ENCODE measurements at regions of chrX and their contacts with region 1.

Region 1: DNA sequence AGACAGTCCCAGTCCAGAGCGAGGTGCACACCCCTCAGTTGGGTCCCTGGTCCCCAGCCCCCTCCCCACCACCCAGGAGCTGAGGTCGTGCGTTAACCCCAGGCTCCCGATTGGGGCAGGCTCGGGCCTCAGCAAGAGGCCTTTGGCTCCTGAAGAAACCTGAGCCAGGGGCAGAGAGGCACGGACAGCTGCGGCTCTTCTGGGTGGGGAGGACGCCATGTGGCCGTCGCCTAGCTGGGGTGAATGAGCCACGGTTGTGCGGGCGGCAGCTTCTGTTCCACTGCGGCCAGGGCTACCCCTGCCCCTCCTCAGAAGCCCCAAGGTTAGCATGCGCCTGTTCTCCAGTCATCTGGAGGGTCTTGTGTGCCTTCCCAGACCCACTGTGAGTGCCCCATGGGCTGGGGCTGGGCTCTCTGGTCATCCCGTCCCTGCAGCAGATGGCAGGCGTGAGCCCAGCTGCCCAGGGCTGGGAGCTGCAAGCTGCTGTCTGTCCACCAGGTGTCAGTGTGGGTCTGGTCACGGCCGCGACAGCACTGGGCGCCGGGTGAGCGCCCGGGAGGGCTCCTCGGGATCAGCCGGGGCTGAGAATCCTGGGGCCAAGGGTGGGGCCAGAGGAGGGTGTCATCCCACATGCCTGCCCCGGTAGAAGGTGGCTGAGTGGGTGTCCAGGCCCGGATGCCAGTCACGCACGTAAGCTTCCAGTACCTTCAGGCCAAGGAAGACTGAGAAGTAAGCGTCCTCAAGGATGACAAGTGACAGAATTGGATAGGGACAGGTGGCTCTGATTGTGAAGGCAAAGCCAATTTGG is 21.9 kb downstream of the ATP2B3 start:
- DNase-seq: peak; percentile 76
- ATAC-seq: peak; percentile 93
- H3K4me3 Mint-ChIP-seq: no peak overlapping the region
- H3K27ac Mint-ChIP-seq: no peak overlapping the region
- H3K4me1 Mint-ChIP-seq: no peaks in the 10 kb centered on the region
- H3K27me3 Mint-ChIP-seq: no peaks in the 10 kb centered on the region
- CTCF ChIP-seq: no peak; the same call in 1 of the 2 replicates

Region 2: GRCh38 chrX:153554519-153555167 is 15.3 kb after region 1 on chrX:
- CTCF ChIA-PET with region 1: interaction called, 20 read pairs
- POLR2A ChIA-PET with region 1: no interaction called
- DNase-seq: peak; percentile 74
- ATAC-seq: peak; percentile 84
- H3K4me3 Mint-ChIP-seq: no peak overlapping the region
- H3K27ac Mint-ChIP-seq: no peak overlapping the region
- H3K4me1 Mint-ChIP-seq: no peaks in the 10 kb centered on the region
- H3K27me3 Mint-ChIP-seq: no peaks in the 10 kb centered on the region
- CTCF ChIP-seq: peak; percentile 38

Region 3: DNA sequence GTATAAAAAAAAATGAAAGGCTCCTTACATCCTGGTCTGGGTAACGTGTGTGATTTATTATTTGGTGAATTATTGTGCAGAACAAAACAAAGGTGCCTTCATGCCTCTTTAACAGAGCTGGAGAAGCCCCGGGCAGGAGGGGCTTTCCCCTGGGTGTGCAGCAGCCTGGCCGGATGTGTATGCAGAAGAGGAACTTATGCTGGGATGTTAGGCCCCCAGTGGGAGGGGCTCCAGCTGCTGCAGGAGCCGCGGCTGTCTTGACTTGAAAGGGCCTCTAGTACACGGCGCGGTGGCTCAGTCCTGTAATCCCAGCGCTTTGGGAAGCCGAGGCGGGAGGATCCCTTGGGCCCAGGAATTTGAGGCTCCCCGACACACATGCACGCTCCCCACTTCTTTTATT is 43.5 kb after region 1 on chrX:
- CTCF ChIA-PET with region 1: interaction called, 10 read pairs
- POLR2A ChIA-PET with region 1: no interaction called
- DNase-seq: no peak
- ATAC-seq: no peak
- H3K4me3 Mint-ChIP-seq: no peak overlapping the region
- H3K27ac Mint-ChIP-seq: no peak overlapping the region
- H3K4me1 Mint-ChIP-seq: peaks cover 14% of the 10 kb centered on the region
- H3K27me3 Mint-ChIP-seq: no peaks in the 10 kb centered on the region; the same call in 1 of the 2 replicates
- CTCF ChIP-seq: no peak

Region 4: DNA sequence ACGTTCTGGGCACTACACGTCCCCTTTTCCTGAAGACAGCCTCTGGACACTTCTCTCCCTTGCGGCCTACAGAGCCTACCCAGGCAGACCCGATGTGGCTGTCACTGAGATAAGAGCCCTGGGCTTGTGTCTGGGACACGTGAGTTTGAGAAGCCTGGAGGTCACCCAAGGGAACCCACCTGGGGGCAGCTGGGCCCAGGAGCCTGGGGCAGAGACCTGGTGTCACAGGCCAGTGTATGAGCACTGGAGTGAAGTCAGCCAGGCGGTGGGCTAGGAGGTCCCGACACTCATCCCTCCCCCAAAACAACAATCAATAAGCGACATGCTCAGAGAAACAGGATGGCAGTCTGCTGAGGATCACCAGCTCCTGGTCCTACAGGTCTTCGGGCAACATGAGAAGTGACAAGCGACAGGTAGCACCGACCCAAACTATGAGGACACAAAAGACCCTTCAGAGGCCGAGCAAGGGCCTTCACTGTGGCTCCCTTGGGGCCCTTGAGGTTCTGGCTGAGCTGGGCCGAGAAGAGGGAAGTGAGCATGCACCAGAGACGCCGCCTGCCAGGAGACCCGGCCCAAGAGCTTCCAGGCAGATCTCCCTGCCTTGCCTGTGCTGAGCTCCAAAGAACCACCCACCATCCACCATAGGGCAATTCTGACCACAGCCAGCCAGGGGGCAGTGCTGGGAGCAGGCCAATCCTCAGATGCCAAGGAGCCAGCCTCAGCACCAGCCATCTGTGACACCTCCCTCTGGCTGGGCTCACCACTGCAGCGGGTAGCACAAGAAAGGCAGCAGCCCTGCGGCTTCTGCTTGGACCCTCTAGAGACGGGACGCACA is 96.6 kb after region 1 on chrX:
- CTCF ChIA-PET with region 1: interaction called, 10 read pairs
- POLR2A ChIA-PET with region 1: no interaction called
- DNase-seq: peak; percentile 70
- ATAC-seq: peak; percentile 97
- H3K4me3 Mint-ChIP-seq: no peak overlapping the region
- H3K27ac Mint-ChIP-seq: no peak overlapping the region
- H3K4me1 Mint-ChIP-seq: no peaks in the 10 kb centered on the region
- H3K27me3 Mint-ChIP-seq: peaks cover 6% of the 10 kb centered on the region
- CTCF ChIP-seq: no peak

Region 5: DNA sequence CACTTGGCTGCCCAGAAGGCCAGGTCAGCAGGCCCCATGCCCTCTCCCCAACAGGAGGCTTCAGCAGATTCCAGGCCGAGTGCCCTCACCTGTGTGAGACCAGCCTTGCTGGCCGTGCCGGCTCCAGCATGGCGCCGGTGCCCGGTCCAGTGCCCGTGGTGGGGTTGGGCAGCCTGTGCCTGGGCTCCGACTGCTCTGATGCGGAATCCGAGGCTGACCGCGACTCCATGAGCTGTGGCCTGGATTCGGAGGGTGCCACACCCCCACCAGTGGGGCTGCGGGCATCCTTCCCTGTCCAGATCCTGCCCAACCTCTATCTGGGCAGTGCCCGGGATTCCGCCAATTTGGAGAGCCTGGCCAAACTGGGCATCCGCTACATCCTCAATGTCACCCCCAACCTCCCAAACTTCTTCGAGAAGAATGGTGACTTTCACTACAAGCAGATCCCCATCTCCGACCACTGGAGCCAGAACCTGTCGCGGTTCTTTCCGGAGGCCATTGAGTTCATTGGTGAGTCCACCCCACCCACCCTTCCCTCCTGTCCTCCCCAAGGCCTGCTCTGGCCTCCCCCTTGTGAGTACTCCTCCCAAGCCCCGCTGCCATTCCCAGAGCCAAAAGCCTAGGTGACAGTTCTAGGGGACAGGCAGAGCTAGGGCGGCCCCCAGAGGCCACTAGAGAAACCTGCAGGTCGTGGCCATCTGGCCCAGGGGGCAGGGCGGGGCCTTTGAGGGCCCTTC is 110.0 kb after region 1 on chrX:
- CTCF ChIA-PET with region 1: interaction called, 20 read pairs
- POLR2A ChIA-PET with region 1: no interaction called
- DNase-seq: peak; percentile 73
- ATAC-seq: peak; percentile 73
- H3K4me3 Mint-ChIP-seq: no peak overlapping the region
- H3K27ac Mint-ChIP-seq: no peak overlapping the region
- H3K4me1 Mint-ChIP-seq: no peaks in the 10 kb centered on the region
- H3K27me3 Mint-ChIP-seq: peaks cover 50% of the 10 kb centered on the region
- CTCF ChIP-seq: no peak

Region 6: DNA sequence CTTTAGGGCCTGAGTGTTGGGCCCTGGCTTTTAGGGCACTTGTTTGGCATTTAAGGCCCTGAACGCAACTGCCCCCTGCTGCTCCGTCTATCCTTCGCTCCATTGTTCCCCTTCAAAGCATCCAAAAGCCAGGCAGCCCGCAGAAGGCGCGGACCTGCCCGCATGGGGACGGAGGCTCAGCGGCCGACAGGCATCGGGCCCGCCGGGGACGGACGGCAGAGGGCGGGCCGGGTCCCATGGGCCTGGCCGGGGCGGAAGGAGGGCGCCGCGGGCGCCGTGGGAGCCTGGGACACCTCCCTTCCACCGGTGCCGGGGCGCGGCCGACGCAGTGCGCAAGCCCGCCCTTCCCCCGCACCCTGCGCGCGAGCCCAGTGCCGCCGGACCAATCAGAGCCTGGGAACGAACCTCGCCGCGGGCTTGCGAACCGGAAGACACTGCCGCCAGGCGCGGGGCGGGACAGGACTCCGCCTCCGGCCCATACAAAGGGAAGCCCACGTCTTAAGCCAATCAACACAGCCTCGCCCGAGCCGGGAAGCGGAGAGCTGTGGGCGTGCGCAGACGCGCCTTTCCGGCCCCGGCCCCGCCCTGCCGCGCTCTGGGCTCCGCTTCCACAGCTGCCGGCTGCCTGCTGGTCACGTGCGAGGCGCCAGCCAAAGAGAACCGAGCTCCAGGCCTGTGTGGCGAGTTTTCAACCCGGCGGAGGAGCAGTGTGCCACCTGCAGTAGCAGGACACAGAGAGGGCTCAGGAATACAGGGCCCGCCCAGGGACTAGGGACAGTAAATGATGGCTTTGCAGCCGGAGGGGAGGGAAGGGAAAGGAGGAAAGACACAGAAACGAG is 388.8 kb after region 1 on chrX:
- CTCF ChIA-PET with region 1: no interaction called
- POLR2A ChIA-PET with region 1: no interaction called
- DNase-seq: peak; percentile 91
- ATAC-seq: peak; percentile 89
- H3K4me3 Mint-ChIP-seq: peak overlapping the region; percentile 79
- H3K27ac Mint-ChIP-seq: peak overlapping the region; percentile 98
- H3K4me1 Mint-ChIP-seq: peaks cover 25% of the 10 kb centered on the region
- H3K27me3 Mint-ChIP-seq: no peaks in the 10 kb centered on the region
- CTCF ChIP-seq: no peak

Measured in WTC11 (cell line).